ENCODE measurements at regions of chr7 and their contacts with region 1.

Region 1: DNA sequence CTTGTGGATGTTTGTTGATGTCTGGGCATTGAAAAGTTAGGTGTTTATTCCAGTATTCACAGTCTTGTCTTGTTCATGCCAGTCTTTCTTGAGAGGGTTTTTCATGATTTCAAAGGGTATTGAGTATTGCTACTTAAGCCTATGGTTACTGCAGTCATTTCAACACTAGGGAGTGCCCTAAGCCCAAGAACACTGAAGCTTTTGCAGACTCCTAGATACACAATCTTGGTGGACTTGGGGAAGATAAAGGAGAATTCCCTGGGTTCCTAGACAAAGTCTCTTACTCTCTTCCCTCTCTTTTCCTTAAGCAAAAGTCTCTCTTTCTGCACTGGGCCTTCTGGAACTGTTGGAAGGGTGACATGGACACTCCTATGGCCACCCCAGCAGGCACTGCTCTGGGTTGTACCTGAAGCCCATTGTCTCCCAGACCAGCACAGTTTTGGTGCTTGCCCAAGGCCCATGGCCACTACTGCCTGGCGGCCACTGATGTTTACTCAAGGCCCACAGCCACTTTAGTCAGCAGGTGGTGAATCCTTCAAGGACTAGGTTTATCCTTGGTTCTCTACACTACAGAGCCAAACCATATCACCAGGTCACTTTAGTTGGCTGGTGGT is 24.9 kb downstream of the SAMD9 start:
- DNase-seq: peak; percentile 15
- ATAC-seq: peak; percentile 70
- H3K4me3 ChIP-seq: no peak overlapping the region
- H3K27ac ChIP-seq: no peak overlapping the region
- H3K4me1 ChIP-seq: no peaks in the 10 kb centered on the region
- H3K27me3 ChIP-seq: no peaks in the 10 kb centered on the region
- CTCF ChIP-seq: peak; percentile 48
- EP300 ChIP-seq: no peak
- POLR2A ChIP-seq: no peak
- RAD21 ChIP-seq: no peak

Region 2: DNA sequence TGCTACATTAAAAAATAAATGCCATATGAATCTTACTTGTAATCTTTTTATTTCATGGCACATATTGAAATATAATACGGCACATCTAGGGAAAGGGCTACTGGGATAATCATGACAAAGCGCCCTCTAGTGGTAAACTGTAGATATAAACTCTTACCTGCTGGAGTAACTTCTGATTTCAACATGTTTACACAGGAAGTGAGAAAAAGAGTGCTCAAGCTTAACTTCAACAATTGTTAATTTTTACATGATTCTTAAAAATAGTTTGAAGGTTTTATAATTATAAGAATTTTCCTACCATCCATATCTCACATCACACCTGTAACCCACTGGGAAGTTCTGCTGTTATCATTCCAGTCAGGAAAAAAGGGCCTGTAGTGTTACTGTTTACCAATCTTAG is 135.4 kb after region 1 on chr7:
- CTCF ChIA-PET with region 1: interaction called, 7 read pairs
- POLR2A ChIA-PET with region 1: no interaction called
- in situ Hi-C with region 1: no loop called
- intact Hi-C with region 1: loop called (anchors 1 kb)
- DNase-seq: peak; percentile 56
- ATAC-seq: no peak
- H3K4me3 ChIP-seq: no peak overlapping the region
- H3K27ac ChIP-seq: no peak overlapping the region
- H3K4me1 ChIP-seq: peaks cover 6% of the 10 kb centered on the region; the same call in 1 of the 2 replicates
- H3K27me3 ChIP-seq: no peaks in the 10 kb centered on the region; a peak in 1 of 5 replicates
- CTCF ChIP-seq: peak; percentile 61
- EP300 ChIP-seq: no peak
- POLR2A ChIP-seq: no peak
- RAD21 ChIP-seq: no peak